ENCODE measurements at regions of chrX and their contacts with region 1.

Region 1: DNA sequence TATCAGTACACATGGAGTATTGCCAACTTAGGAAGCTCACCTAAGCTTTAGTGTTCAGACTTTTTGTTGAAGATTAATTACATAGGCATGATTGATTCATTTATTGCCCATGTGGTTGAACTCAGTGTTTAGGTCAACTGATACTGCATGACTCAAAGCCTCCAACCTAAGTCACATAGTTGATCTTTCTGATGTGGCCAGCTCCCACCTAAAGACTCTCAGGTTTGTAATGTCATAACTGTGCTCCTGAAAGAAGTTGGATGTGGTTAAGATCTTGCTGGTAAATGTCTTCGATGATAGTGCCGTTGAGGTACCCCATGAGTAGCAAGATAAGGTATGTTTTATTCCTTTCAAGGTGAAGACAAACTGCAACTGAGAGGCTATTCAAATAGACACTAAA is 192.5 kb downstream of the EDA start:
- DNase-seq: no peak
- H3K4me3 Mint-ChIP-seq: no peak overlapping the region
- H3K27ac Mint-ChIP-seq: no peak overlapping the region
- H3K4me1 Mint-ChIP-seq: peaks cover 10% of the 10 kb centered on the region
- H3K27me3 Mint-ChIP-seq: no peaks in the 10 kb centered on the region

Region 2: GRCh38 chrX:69396916-69397315 is 411.5 kb before region 1 on chrX:
- intact Hi-C with region 1: no loop called
- DNase-seq: no peak
- H3K4me3 Mint-ChIP-seq: no peak overlapping the region
- H3K27ac Mint-ChIP-seq: no peak overlapping the region
- H3K4me1 Mint-ChIP-seq: no peaks in the 10 kb centered on the region
- H3K27me3 Mint-ChIP-seq: no peaks in the 10 kb centered on the region

Region 3: GRCh38 chrX:69630147-69630546 is 178.2 kb before region 1 on chrX:
- intact Hi-C with region 1: loop called (anchors 5 kb)
- DNase-seq: no peak
- H3K4me3 Mint-ChIP-seq: no peak overlapping the region
- H3K27ac Mint-ChIP-seq: no peak overlapping the region
- H3K4me1 Mint-ChIP-seq: peaks cover 16% of the 10 kb centered on the region
- H3K27me3 Mint-ChIP-seq: no peaks in the 10 kb centered on the region

Region 4: GRCh38 chrX:69664693-69665092 is 143.7 kb before region 1 on chrX:
- intact Hi-C with region 1: no loop called
- DNase-seq: no peak
- H3K4me3 Mint-ChIP-seq: no peak overlapping the region
- H3K27ac Mint-ChIP-seq: no peak overlapping the region
- H3K4me1 Mint-ChIP-seq: no peaks in the 10 kb centered on the region
- H3K27me3 Mint-ChIP-seq: no peaks in the 10 kb centered on the region

Region 5: DNA sequence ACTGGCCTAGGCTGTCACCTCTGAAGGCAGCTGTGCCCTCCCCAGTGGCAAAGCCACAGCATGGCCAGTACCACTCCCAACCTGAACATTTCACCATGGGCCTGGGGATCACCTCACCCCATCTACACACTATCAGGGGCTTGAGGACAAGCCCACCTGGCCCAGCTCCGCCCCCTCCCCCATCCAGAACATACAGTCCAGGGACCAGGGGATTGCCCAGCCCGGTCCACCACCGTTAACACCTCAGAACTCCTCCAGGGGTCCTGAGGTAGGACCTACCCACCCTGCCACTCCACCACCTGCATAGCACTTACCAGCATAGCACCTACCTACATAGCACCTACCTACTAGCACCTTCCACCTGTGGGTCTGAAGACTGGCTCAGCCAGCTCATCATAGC is 12.7 kb before region 1 on chrX:
- intact Hi-C with region 1: no loop called
- DNase-seq: no peak
- H3K4me3 Mint-ChIP-seq: no peak overlapping the region
- H3K27ac Mint-ChIP-seq: no peak overlapping the region
- H3K4me1 Mint-ChIP-seq: no peaks in the 10 kb centered on the region
- H3K27me3 Mint-ChIP-seq: no peaks in the 10 kb centered on the region

Region 6: GRCh38 chrX:69988955-69989394 is 180.6 kb after region 1 on chrX:
- intact Hi-C with region 1: no loop called
- DNase-seq: no peak
- H3K4me3 Mint-ChIP-seq: no peak overlapping the region
- H3K27ac Mint-ChIP-seq: no peak overlapping the region
- H3K4me1 Mint-ChIP-seq: no peaks in the 10 kb centered on the region
- H3K27me3 Mint-ChIP-seq: no peaks in the 10 kb centered on the region

Measured in activated CD4-positive, alpha-beta T cell treated with anti-CD3 and anti-CD28 coated beads, Interleukin-2, amount 10 ng/mL, durations not matched to agents 24 days and 14 days (primary cell).